Mammary epithelial cell (primary cell): ENCODE measurements at regions of chr11 and their contacts with region 1.

Region 1: GRCh38 chr11:123145220-123145619 is 49.8 kb downstream of the CLMP start:
- DNase-seq: peak; percentile 93
- H3K4me3 ChIP-seq: no peak overlapping the region
- H3K27ac ChIP-seq: peak overlapping the region; percentile 70
- H3K4me1 ChIP-seq: peaks cover 12% of the 10 kb centered on the region
- H3K27me3 ChIP-seq: no peaks in the 10 kb centered on the region
- CTCF ChIP-seq: no peak

Region 2: DNA sequence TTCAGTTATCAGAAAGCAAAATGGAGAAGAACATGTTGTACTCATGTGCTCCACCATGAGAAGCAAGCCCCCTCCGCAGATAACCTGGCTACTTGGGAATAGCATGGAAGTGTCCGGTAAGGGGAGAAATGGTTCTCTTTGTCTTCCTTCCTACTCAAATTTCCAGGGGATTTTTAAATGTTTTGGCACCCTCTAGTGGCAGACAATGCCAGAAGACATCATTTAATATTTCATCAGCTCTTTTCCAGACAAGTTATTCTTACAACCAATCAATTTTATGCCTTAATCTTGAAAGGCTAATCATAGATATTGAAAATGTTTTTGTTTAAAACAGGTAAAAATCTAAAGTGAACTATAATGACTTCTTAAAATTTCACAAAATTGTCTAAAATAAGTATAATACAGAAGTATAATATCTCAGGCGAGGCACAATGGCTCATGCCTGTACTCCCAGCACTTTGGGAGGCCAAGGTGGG is 291.2 kb before region 1 on chr11:
- CTCF ChIA-PET with region 1: no interaction called
- dilution Hi-C with region 1: no loop called
- in situ Hi-C with region 1: no loop called
- intact Hi-C with region 1: no loop called
- DNase-seq: peak; percentile 72
- H3K4me3 ChIP-seq: no peak overlapping the region
- H3K27ac ChIP-seq: no peak overlapping the region
- H3K4me1 ChIP-seq: peaks cover 35% of the 10 kb centered on the region
- H3K27me3 ChIP-seq: no peaks in the 10 kb centered on the region
- CTCF ChIP-seq: peak; percentile 63 to 67

Region 3: DNA sequence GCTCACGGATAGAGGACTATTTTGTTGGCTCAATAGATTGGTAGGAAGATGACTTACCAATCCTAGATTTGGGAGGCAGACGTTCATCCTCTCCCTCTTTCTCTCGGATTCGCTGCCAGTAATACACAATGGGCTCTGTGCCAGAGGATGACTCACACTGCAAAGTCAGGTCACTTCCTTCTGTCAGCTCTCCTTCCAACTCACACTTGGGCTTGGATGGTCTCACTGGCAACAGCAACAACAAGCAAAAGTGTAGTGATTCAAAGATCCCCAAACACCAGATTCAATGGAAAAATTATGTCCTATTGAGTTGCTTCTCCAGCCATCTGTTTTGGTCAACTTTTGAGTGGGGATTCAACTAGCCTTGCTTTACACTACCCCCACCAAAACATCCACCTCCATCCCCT is 61.6 kb before region 1 on chr11:
- CTCF ChIA-PET with region 1: no interaction called
- dilution Hi-C with region 1: no loop called
- in situ Hi-C with region 1: no loop called
- intact Hi-C with region 1: no loop called
- DNase-seq: peak; percentile 94
- H3K4me3 ChIP-seq: no peak overlapping the region
- H3K27ac ChIP-seq: peak overlapping the region; percentile 74
- H3K4me1 ChIP-seq: peaks cover 4% of the 10 kb centered on the region
- H3K27me3 ChIP-seq: no peaks in the 10 kb centered on the region
- CTCF ChIP-seq: no peak

Region 4: GRCh38 chr11:123122341-123122740 is 22.9 kb before region 1 on chr11:
- CTCF ChIA-PET with region 1: no interaction called
- dilution Hi-C with region 1: no loop called
- in situ Hi-C with region 1: no loop called
- intact Hi-C with region 1: loop called (anchors 2 kb)
- DNase-seq: peak; percentile 43
- H3K4me3 ChIP-seq: no peak overlapping the region
- H3K27ac ChIP-seq: peak overlapping the region; percentile 56
- H3K4me1 ChIP-seq: peaks cover 22% of the 10 kb centered on the region
- H3K27me3 ChIP-seq: no peaks in the 10 kb centered on the region
- CTCF ChIP-seq: no peak

Region 5: DNA sequence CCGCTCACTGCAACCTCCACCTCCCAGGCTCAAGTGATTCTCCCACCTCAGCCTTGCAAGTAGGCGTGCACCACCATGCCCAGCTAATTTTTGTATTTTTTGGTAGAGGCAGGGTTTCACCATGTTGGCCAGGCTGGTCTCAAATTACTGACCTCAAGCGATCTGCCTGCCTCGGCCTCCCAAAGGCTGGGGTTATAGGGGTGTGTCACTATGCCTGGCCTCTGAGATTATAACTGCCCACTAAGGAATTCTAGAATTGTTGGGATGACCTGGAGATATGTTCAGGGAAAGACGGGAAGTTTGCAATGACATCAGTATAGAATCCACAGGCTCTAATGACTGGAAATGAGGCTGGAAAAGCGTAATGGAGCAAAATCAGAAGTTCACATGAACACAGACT is 12.4 kb before region 1 on chr11:
- CTCF ChIA-PET with region 1: no interaction called
- dilution Hi-C with region 1: no loop called
- in situ Hi-C with region 1: no loop called
- intact Hi-C with region 1: no loop called
- DNase-seq: no peak
- H3K4me3 ChIP-seq: no peak overlapping the region
- H3K27ac ChIP-seq: no peak overlapping the region
- H3K4me1 ChIP-seq: peaks cover 10% of the 10 kb centered on the region
- H3K27me3 ChIP-seq: no peaks in the 10 kb centered on the region
- CTCF ChIP-seq: no peak

Region 6: DNA sequence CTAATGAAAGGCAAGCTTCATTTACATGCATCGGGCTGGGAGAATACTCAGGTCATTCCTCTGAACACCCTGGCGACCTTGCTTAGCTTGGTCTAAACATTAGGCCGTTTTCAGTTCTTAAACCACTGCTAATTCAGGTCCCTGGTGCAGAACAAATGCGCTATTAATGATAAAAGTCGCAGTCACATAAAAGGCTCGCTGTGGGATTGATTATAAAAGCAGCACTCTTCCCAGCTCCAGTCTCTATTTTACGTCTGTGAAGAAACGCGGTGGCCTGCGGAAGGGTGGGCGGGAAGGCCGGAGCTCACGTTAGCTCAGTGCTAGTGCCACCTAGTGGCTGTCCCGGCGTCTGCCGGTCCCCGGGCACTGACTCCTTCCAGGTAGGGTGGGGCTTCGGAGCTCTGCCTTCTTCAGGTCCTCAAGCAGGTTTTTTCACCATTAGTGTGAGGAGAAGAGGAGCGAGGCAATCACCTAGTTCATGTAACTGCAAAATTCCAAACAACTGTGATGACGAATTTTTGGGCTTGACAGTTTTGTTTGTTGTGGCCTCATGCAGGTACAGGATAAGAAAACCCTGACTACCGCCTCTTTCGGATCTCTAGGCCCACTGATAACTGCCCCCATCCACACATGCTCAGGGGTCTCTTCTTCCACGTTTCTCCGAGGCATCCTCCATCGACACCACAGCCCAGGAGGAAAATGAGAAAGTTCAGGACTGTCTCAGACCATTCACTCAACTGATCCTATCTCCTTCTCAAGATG is 116.3 kb after region 1 on chr11:
- CTCF ChIA-PET with region 1: no interaction called
- dilution Hi-C with region 1: no loop called
- in situ Hi-C with region 1: no loop called
- intact Hi-C with region 1: no loop called
- DNase-seq: peak; percentile 71
- H3K4me3 ChIP-seq: no peak overlapping the region
- H3K27ac ChIP-seq: no peak overlapping the region
- H3K4me1 ChIP-seq: peaks cover 6% of the 10 kb centered on the region
- H3K27me3 ChIP-seq: no peaks in the 10 kb centered on the region
- CTCF ChIP-seq: peak; percentile 89